ENCODE measurements at regions of chr3 and their contacts with region 1.

Region 1: DNA sequence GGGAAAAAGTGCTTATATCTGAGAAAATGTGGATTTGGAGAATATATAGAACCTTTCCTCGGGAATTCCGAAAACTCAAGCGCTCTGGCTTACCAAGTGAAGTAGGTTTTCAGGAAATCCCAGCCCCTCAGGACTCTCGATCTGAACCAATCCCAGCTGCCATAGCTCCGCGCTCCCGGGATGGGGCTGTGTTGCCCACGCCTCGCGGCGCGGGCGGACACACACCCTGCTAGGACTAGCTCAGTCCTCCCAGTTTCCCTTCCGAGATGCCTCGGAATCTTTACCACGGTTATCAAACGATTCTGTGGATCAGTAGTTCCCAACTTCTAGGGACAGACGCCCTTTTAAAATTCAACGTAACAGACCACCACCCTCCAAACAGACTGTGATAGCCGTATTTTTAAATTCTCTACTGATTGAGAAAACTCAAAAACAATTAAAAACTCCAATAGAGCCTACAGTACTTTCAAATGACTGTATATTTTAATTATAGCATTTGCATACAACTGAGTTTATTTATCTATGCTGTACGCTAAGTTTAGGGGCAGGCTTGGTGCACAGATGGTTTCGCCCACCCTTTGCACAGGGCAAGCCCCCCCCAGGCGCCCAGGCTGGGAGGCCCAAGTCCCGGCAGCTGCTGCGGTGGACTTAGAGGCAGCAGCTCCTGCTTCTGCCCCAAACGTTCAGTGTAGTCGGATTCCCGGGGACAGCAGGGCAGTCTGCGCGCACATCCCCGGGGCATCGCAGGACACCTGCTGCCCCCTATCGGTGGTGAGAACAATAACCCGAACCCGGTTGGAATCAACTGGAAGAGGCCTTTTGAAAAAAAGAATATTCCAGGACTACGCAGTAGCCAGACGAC is 52.3 kb downstream of the CCDC54 start:
- DNase-seq: no peak
- H3K4me3 ChIP-seq: peak overlapping the region; percentile 82 to 91
- H3K27ac ChIP-seq: peak overlapping the region; percentile 95
- H3K4me1 ChIP-seq: peaks cover 16% of the 10 kb centered on the region
- H3K27me3 ChIP-seq: no peaks in the 10 kb centered on the region
- CTCF ChIP-seq: peak; percentile 36 to 85 (median 81)
- POLR2A ChIP-seq: no peak

Region 2: GRCh38 chr3:106491796-106492195 is 937.8 kb before region 1 on chr3:
- intact Hi-C with region 1: no loop called
- DNase-seq: no peak
- H3K4me3 ChIP-seq: no peak overlapping the region
- H3K27ac ChIP-seq: no peak overlapping the region
- H3K4me1 ChIP-seq: no peaks in the 10 kb centered on the region
- H3K27me3 ChIP-seq: no peaks in the 10 kb centered on the region
- CTCF ChIP-seq: no peak
- POLR2A ChIP-seq: no peak

Region 3: GRCh38 chr3:107115755-107116154 is 313.8 kb before region 1 on chr3:
- intact Hi-C with region 1: no loop called
- DNase-seq: no peak
- H3K4me3 ChIP-seq: no peak overlapping the region
- H3K27ac ChIP-seq: no peak overlapping the region
- H3K4me1 ChIP-seq: no peaks in the 10 kb centered on the region
- H3K27me3 ChIP-seq: no peaks in the 10 kb centered on the region
- CTCF ChIP-seq: no peak
- POLR2A ChIP-seq: no peak

Region 4: DNA sequence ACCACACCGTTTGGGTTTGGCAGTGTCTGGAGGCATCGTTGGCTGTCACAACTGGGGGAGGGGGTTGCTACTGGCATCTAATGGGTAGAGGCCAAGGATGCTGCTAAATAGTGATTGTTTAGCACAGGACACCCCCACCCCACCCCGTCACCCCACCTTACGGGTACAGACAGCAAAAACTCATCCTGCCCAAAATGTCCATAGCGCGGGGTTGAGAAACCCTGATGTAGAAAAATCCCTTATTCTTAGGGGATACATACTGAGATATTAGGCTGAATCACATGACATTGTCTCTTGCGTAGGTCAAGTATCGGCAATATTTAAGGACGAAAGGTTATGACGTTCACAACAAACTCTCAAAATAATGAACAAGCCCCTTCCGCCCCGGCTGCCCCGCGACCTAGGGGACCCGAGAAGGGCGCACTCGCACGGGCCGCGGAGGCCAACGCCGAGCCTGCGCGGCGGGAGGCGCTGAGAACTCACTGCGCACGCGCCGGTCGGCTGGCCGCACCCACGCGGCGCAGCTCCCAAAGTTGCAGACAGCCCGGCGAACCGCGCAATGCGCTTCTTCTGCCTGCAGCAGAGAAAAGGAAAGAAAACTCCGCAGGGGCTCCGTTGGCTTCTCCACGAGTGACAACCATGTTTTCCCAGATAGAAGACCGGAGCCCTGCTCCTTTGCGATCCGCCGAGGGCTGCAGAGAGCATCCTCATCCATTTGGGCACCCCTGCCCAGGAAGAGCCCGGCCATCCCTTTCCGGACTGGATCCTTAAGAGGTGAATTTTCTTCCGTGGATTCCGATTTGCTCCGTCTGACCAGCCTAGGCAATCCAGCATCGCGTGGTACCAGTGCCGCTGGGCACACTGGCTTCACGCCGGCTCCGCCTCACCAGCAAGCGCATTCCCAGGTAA is 189.1 kb before region 1 on chr3:
- intact Hi-C with region 1: loop called (anchors 10 kb)
- DNase-seq: no peak
- H3K4me3 ChIP-seq: peak overlapping the region; percentile 66 to 75
- H3K27ac ChIP-seq: peak overlapping the region; percentile 70
- H3K4me1 ChIP-seq: peaks cover 18% of the 10 kb centered on the region
- H3K27me3 ChIP-seq: no peaks in the 10 kb centered on the region
- CTCF ChIP-seq: no peak
- POLR2A ChIP-seq: peak in 1 of 2 donors; percentile 35

Region 5: DNA sequence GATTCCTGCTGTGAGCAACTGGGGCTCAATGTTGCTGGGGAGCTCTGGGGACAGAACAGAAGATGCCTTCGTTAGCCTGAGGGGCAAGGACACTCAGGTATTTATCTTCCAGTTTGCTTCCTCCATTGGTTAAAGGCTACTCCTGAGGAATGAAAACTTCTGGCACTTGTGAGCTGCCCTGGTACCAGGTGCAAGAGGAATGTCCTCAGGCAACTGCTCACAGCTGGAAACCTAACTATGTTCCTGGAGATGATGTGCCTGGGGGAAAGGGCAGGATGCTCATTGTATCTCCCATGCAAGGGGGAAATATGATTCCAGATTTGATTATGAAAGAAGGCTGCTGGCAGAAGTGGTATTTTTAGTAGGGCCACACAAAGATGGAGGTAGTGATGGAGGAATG is 39.3 kb after region 1 on chr3:
- intact Hi-C with region 1: no loop called
- DNase-seq: no peak
- H3K4me3 ChIP-seq: no peak overlapping the region
- H3K27ac ChIP-seq: no peak overlapping the region
- H3K4me1 ChIP-seq: no peaks in the 10 kb centered on the region
- H3K27me3 ChIP-seq: no peaks in the 10 kb centered on the region
- CTCF ChIP-seq: no peak
- POLR2A ChIP-seq: no peak

Region 6: DNA sequence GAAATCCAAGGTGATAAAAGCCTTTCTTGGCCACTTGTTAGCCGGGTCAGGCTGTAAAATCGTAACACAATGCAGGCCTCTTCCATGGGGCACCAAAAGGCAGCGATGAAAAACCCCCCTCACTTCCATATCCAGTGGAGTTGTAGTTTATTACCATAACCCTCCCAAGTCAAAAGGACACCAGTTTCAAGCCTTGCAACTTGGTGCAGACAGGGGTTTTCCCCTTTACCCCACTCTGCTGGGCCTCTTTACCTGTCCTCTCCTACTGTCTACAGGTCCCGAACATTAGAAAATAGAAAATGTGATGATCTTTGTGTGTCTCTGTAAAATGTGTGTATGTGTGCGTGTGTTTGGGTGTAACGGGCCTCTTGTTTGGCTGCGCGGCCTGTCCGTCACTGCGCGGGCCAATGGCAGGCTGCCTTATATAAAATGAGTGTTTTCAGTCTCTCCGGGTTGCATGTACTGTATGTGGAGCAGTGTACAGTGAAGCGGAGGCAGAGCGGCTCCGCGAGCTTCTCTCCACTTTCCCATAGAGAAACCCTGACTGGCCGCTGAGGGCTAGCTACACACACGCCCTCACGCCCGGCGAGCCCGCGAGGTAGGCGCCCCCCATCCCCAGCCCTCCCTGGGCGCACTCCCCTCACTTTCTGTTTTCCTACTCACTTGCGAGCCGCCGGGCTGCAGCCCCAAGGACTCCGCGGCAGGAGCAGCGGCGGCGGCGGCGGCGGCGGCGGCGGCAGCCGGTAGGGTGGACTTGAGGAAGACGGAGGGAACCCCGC is 93.1 kb after region 1 on chr3 and contains the start of gene BBX:
- intact Hi-C with region 1: loop called (anchors 10 kb)
- DNase-seq: peak; percentile 97 to 99
- H3K4me3 ChIP-seq: peak within 1 kb of the TSS; percentile 67 to 91
- H3K27ac ChIP-seq: peak within 1 kb of the TSS; percentile 98
- H3K4me1 ChIP-seq: peaks cover 14% of the 10 kb centered on the region
- H3K27me3 ChIP-seq: no peaks in the 10 kb centered on the region
- CTCF ChIP-seq: no peak
- POLR2A ChIP-seq: peak; percentile 33 to 84
- total RNA-seq, gene BBX: 39.5 TPM

Region 7: GRCh38 chr3:107718547-107718946 is 289.0 kb after region 1 on chr3:
- intact Hi-C with region 1: no loop called
- DNase-seq: no peak
- H3K4me3 ChIP-seq: no peak overlapping the region
- H3K27ac ChIP-seq: no peak overlapping the region
- H3K4me1 ChIP-seq: peaks cover 11% of the 10 kb centered on the region
- H3K27me3 ChIP-seq: no peaks in the 10 kb centered on the region
- CTCF ChIP-seq: no peak
- POLR2A ChIP-seq: no peak

Measured in vagina (tissue), 2 donors.